Psoas muscle (tissue), 8 donors: ENCODE measurements at regions of chr2 and their contacts with region 1.

Region 1: GRCh38 chr2:97870396-97870843 is 125.3 kb downstream of the TMEM131 start:
- DNase-seq: no peak
- ATAC-seq: peak; percentile 84 to 91 (median 86)
- H3K4me3 ChIP-seq: peak overlapping the region; percentile 33
- H3K27ac ChIP-seq: peak overlapping the region; percentile 93
- H3K4me1 ChIP-seq: peaks cover 43% of the 10 kb centered on the region
- H3K27me3 ChIP-seq: no peaks in the 10 kb centered on the region
- CTCF ChIP-seq: no peak

Region 2: GRCh38 chr2:97546711-97547110 is 323.7 kb before region 1 on chr2:
- intact Hi-C with region 1: no loop called
- DNase-seq: no peak
- ATAC-seq: no peak
- H3K4me3 ChIP-seq: no peak overlapping the region
- H3K27ac ChIP-seq: no peak overlapping the region
- H3K4me1 ChIP-seq: no peaks in the 10 kb centered on the region
- H3K27me3 ChIP-seq: no peaks in the 10 kb centered on the region
- CTCF ChIP-seq: no peak

Region 3: DNA sequence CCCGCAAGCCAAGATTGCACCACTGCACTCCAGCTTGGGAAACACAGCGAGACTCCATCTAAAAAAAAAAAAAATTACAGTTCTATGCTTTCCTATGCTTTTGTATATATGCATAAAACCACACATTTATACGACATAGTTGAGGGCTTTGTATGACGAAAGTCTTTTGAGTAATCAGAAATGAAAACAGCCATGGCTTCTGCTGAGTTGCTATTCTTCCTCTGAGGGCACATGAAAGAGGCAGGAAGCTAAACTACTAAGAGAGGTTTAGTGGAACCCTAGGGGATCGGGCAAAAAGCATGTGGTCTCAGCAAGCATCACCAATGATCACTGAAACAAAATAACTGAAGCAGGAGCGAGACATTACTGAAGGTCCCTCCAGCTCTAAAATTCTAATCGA is 57.5 kb before region 1 on chr2:
- intact Hi-C with region 1: no loop called
- DNase-seq: no peak
- ATAC-seq: no peak
- H3K4me3 ChIP-seq: no peak overlapping the region
- H3K27ac ChIP-seq: no peak overlapping the region
- H3K4me1 ChIP-seq: no peaks in the 10 kb centered on the region
- H3K27me3 ChIP-seq: no peaks in the 10 kb centered on the region
- CTCF ChIP-seq: no peak

Region 4: GRCh38 chr2:97834610-97835009 is 35.8 kb before region 1 on chr2:
- intact Hi-C with region 1: no loop called
- DNase-seq: no peak
- ATAC-seq: no peak
- H3K4me3 ChIP-seq: no peak overlapping the region
- H3K27ac ChIP-seq: no peak overlapping the region
- H3K4me1 ChIP-seq: peaks cover 6% of the 10 kb centered on the region
- H3K27me3 ChIP-seq: no peaks in the 10 kb centered on the region
- CTCF ChIP-seq: no peak

Region 5: DNA sequence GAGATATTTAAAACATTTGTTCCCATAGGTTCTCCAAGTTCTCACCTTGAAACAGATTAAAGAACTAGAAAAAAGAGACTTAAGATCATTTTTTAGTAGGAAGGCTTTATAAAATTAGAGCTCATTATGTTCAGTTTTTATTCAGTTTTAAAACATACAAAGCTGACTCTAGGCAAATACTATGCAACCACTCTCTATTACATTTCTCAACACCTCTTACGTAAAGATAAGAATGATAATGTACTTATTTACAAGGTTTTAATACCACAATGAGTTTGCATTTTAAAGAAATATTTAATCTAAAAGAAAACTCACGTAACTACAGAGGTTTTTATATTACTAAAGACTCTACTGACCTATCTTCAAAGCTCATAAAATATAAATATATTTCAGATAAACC is 56.5 kb after region 1 on chr2:
- intact Hi-C with region 1: loop called (anchors 5 to 10 kb)
- DNase-seq: no peak
- ATAC-seq: no peak
- H3K4me3 ChIP-seq: no peak overlapping the region
- H3K27ac ChIP-seq: no peak overlapping the region
- H3K4me1 ChIP-seq: peaks cover 27% of the 10 kb centered on the region
- H3K27me3 ChIP-seq: no peaks in the 10 kb centered on the region
- CTCF ChIP-seq: no peak

Region 6: DNA sequence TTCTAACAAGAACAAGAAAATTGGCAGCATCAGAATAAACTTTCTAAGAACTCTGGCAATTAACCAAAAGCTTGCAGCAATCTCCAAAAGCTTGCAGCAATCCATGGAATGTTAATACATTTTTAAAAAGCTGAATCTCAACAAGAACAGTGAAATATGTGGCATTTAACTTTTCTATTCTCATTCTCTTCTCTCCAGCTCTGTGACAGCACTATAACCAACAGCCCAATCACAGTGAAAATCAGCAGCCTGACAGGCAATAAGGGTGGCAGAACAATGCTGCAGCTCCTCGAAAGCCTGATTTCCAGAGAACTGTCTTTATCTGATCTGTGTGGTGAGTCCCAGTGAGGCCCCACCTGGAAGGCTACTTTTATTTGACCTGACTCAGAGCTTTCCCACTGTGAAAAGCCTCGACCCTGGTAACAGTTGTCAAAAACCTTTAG is 65.3 kb after region 1 on chr2:
- intact Hi-C with region 1: loop called in 1 of 2 experiments (anchors 5 kb)
- DNase-seq: no peak
- ATAC-seq: peak; percentile 23 to 38 (median 36)
- H3K4me3 ChIP-seq: peak overlapping the region; percentile 13
- H3K27ac ChIP-seq: peak overlapping the region; percentile 73
- H3K4me1 ChIP-seq: peaks cover 59% of the 10 kb centered on the region
- H3K27me3 ChIP-seq: no peaks in the 10 kb centered on the region
- CTCF ChIP-seq: no peak

Region 7: GRCh38 chr2:98308068-98308467 is 437.6 kb after region 1 on chr2:
- intact Hi-C with region 1: no loop called
- DNase-seq: no peak
- ATAC-seq: no peak
- H3K4me3 ChIP-seq: no peak overlapping the region
- H3K27ac ChIP-seq: no peak overlapping the region
- H3K4me1 ChIP-seq: no peaks in the 10 kb centered on the region
- H3K27me3 ChIP-seq: peaks cover 0 to 2% (median 0%) of the 10 kb centered on the region in 3 donors
- CTCF ChIP-seq: no peak